ENCODE measurements at regions of chr2 and their contacts with region 1.

Region 1: GRCh38 chr2:136582628-136583205 is 182.6 kb upstream of the THSD7B start:
- DNase-seq: peak; percentile 9 to 21
- ATAC-seq: no peak
- H3K4me3 ChIP-seq: no peak overlapping the region
- H3K27ac ChIP-seq: no peak overlapping the region
- H3K4me1 ChIP-seq: no peaks in the 10 kb centered on the region
- H3K27me3 ChIP-seq: no peaks in the 10 kb centered on the region
- CTCF ChIP-seq: no peak

Region 2: DNA sequence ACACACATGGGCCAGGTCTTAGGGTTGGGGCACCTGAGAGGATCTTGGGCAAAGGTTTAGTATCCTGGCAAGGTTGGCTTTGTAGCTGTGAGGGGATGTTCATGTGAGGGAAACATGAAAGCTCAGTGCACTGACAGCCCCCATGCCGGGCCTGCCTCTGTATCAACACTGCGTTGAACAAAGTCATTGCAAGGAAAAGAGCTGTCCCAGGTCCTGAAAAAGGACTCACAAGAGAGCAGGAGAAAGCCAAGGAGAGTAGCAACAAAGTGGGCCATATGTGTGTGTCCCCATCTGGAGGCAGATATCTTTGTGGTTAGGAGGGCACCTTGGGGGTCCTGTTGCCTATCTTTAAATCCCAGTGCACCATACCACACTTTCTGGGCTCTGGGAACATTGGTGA is 55.2 kb before region 1 on chr2:
- intact Hi-C with region 1: loop called in 1 of 10 experiments (anchors 5 kb)
- DNase-seq: peak in 1 of 2 donors; percentile 26
- ATAC-seq: no peak
- H3K4me3 ChIP-seq: no peak overlapping the region
- H3K27ac ChIP-seq: no peak overlapping the region
- H3K4me1 ChIP-seq: no peaks in the 10 kb centered on the region
- H3K27me3 ChIP-seq: no peaks in the 10 kb centered on the region
- CTCF ChIP-seq: no peak

Measured in heart right ventricle (tissue), 16 donors.